ENCODE measurements at regions of chr9 and their contacts with region 1.

Region 1: GRCh38 chr9:115733318-115734110 is 420.1 kb upstream of the PAPPA start:
- DNase-seq: no peak
- ATAC-seq: no peak
- H3K4me3 ChIP-seq: no peak overlapping the region
- H3K27ac ChIP-seq: no peak overlapping the region
- H3K4me1 ChIP-seq: no peaks in the 10 kb centered on the region
- H3K27me3 ChIP-seq: no peaks in the 10 kb centered on the region
- CTCF ChIP-seq: no peak

Region 2: GRCh38 chr9:115672477-115673316 is 60.8 kb before region 1 on chr9:
- intact Hi-C with region 1: loop called in 1 of 10 experiments (anchors 10 kb)
- DNase-seq: peak in 1 of 2 donors; percentile 12
- ATAC-seq: peak in 7 of 8 donors; percentile 4 to 78 (median 75)
- H3K4me3 ChIP-seq: no peak overlapping the region
- H3K27ac ChIP-seq: peak overlapping the region in 7 of 10 donors; percentile 30 to 69 (median 59)
- H3K4me1 ChIP-seq: peaks cover 0 to 9% (median 0%) of the 10 kb centered on the region in 9 donors
- H3K27me3 ChIP-seq: no peaks in the 10 kb centered on the region
- CTCF ChIP-seq: no peak

Region 3: DNA sequence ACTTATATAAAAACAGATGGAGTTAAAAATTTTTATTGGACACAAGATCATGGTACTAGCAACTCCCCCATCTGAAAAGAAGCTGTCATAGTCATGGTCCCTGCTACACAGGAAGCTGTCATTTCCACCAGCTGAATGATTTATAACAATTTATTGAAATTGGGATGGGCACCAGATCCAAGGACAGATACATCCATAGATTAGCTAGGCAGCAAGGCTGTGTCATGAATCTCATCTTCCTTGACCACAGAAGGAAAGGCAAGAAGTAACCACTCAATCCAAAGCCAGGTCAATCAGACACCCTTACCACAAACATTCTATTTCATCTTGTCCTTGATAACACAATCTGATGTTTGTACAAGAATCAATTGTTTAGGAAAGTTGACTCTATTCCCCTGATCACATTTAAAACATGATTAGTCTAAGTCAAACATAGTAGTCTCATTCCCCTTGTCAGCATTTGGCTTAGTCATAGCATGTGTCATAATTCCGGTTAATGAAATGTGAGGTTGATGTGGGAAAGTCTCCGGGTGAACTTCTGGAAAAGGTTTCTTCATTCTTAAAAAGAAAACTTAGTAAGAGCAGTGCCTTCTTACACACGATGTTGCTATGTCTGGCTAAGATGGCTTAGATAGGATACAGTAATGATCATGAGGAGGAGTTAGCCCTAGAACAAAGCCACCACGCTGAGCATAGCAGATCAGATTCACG is 42.6 kb before region 1 on chr9:
- intact Hi-C with region 1: no loop called
- DNase-seq: no peak
- ATAC-seq: peak in 5 of 8 donors; percentile 54 to 85 (median 58)
- H3K4me3 ChIP-seq: no peak overlapping the region
- H3K27ac ChIP-seq: peak overlapping the region in 3 of 10 donors; percentile 13 to 72 (median 28)
- H3K4me1 ChIP-seq: peaks cover 0 to 10% (median 0%) of the 10 kb centered on the region in 9 donors
- H3K27me3 ChIP-seq: peaks cover 0 to 2% (median 0%) of the 10 kb centered on the region in 7 donors
- CTCF ChIP-seq: no peak

Region 4: GRCh38 chr9:115777610-115778009 is 44.1 kb after region 1 on chr9:
- intact Hi-C with region 1: no loop called
- DNase-seq: no peak
- ATAC-seq: no peak
- H3K4me3 ChIP-seq: no peak overlapping the region
- H3K27ac ChIP-seq: no peak overlapping the region
- H3K4me1 ChIP-seq: no peaks in the 10 kb centered on the region
- H3K27me3 ChIP-seq: no peaks in the 10 kb centered on the region
- CTCF ChIP-seq: no peak

Measured in heart right ventricle (tissue), 16 donors.